GM13976 (cell line): ENCODE measurements at regions of chr3 and their contacts with region 1.

Region 1: DNA sequence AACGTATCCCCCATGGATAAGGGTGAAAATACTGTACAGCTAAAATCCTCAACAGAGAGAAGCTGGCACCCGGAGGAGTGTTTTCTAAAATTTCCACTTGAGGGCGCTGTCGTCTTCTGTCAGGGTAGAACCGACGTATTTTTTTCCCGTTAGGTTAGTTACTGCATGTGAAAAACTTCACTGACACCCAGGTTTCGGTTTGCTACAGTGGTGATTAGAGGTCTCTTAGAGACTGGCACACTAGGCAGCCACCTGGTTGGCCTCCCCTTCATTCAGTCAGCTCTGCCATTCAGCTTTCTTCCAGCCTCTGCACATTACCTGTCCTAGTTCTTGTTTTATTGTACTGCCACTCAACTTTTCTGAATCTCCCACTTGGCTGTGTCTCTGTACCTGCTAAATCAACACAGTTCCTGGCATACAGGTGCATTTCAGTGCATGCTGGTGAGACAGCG is 18.4 kb downstream of the CCK start:
- DNase-seq: peak; percentile 57
- CTCF ChIP-seq: peak; percentile 51

Region 2: GRCh38 chr3:42090973-42091731 is 156.4 kb before region 1 on chr3 and contains the start of gene TRAK1:
- in situ Hi-C with region 1: no loop called
- DNase-seq: no peak
- CTCF ChIP-seq: no peak

Region 3: GRCh38 chr3:42443819-42444436 is 196.3 kb after region 1 on chr3:
- in situ Hi-C with region 1: loop called (anchors 5 kb)
- DNase-seq: peak; percentile 83
- CTCF ChIP-seq: peak; percentile 94